Motor neuron (in vitro differentiated cells): ENCODE measurements at regions of chr6 and their contacts with region 1.

Region 1: GRCh38 chr6:142692942-142693341 is 252.0 kb downstream of the HIVEP2 start:
- ATAC-seq: peak; percentile 72 to 97 (median 93)
- H3K4me3 ChIP-seq: no peak overlapping the region
- H3K27ac ChIP-seq: no peak overlapping the region
- H3K4me1 ChIP-seq: peaks cover 4 to 9% of the 10 kb centered on the region in 2 donors

Region 2: GRCh38 chr6:142339968-142340658 is 352.8 kb before region 1 on chr6:
- in situ Hi-C with region 1: no loop called
- ATAC-seq: peak in 6 of 8 experiments; percentile 31 to 97 (median 58)
- H3K4me3 ChIP-seq: no peak overlapping the region
- H3K27ac ChIP-seq: no peak overlapping the region
- H3K4me1 ChIP-seq: peaks cover 8 to 9% of the 10 kb centered on the region in 2 donors

Region 3: DNA sequence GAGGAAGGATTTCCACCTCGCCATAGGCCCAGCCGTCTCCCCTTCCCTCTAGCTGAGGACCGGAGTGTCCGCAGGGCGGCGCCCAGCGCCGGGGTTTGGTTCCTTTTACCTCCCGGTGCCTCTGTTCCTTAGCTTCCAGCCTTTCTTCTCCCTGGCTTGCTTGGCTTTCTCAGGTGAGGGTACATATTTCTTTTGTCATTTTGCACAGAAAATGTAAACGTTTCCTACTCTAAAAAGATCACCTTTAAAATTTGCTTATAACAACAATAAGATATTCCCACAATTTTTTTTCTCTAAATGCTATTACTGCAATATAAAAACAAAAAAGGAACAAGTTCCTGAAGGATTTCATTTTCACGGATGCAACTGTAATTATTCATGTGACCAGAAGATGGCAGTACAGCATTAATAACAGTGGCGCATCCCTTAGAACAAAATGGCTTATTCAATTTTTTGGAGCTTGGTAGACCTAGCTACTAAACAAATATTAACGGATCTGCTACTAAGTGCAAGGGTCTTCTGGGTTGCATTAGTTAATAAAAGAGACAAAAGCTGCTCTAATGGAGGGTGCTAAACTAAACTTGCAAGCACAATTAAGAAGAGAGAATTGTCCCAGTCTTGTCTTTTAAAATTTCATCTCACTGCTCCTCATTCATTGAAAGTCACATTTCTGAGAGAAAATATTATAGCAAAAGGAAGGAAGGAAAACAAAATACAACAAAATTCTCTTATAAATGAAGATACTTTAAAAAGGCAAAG is 218.2 kb before region 1 on chr6:
- in situ Hi-C with region 1: loop called in 1 of 9 experiments (anchors 25 kb)
- ATAC-seq: peak in 5 of 8 experiments; percentile 27 to 83 (median 45)
- H3K4me3 ChIP-seq: no peak overlapping the region
- H3K27ac ChIP-seq: no peak overlapping the region
- H3K4me1 ChIP-seq: no peaks in the 10 kb centered on the region

Region 4: DNA sequence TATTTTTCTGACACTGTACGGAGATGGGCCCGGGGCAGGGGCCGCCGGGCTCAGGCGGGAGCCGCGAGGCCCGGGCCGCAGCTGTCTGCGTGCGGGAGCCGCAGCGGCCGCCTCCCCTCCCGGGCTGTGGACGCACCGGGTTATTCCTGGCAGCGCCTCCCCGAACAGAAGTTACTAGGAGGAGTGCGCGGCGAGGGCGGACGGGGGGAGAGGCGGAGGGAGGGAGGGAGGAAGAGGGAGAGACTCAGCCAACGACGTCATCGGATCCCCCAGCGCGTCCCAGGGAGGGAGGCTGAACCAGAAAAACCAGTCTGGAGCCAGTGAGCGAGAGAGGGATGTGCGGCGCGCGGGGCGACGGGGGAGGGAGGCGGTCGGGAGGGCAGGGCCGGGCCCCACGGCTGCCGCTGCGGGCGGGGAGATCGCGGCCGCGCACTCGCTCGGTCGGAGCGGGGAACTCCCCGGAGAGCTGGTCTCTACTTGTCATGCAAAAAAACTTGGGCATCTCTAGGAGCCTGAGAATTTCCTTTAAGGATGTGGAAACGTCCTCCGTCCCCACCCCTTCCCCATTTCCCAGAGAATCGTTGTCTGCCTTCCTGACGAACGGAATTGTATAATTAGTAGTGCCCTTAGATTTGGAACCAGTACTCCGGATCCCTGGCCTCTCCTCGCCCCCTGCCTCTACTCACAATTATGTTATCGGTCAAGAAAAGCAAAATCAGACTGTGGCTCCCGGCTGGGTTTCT is 253.4 kb after region 1 on chr6:
- in situ Hi-C with region 1: loop called in 1 of 9 experiments (anchors 25 kb)
- ATAC-seq: peak; percentile 52 to 69 (median 60)
- H3K4me3 ChIP-seq: peak overlapping the region; percentile 69 to 92 (median 87)
- H3K27ac ChIP-seq: peak overlapping the region; percentile 96
- H3K4me1 ChIP-seq: peaks cover 0 to 13% of the 10 kb centered on the region in 2 donors

Region 5: DNA sequence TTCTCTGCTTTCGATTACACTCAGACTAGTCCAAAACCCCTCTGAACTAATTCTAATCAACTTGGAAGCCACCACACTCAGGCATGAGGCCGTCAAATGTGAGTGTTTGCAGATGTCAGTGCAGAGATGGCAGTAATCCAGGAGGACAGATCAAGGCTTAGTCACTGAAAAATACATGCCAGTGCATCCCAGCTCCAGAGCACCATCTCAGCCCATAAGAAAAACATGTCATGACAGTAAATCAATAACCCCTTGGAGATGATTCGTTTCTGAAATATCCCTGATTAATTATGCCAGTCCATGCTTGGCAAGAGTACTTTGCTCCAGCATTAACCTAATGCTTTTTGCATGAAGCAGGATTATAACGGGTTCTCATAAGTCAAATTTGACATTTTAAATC is 578.1 kb after region 1 on chr6:
- in situ Hi-C with region 1: loop called in 1 of 9 experiments (anchors 25 kb)
- ATAC-seq: peak; percentile 49 to 97 (median 96)
- H3K4me3 ChIP-seq: no peak overlapping the region
- H3K27ac ChIP-seq: peak overlapping the region; percentile 26 to 63
- H3K4me1 ChIP-seq: peaks cover 4 to 17% of the 10 kb centered on the region in 2 donors

Region 6: GRCh38 chr6:143427109-143427817 is 734.3 kb after region 1 on chr6:
- in situ Hi-C with region 1: loop called in 8 of 9 experiments (anchors 10 to 25 kb)
- ATAC-seq: peak; percentile 99 to 100 (median 100)
- H3K4me3 ChIP-seq: no peak overlapping the region
- H3K27ac ChIP-seq: no peak overlapping the region
- H3K4me1 ChIP-seq: no peaks in the 10 kb centered on the region